ENCODE measurements at regions of chr1 and their contacts with region 1.

Region 1: DNA sequence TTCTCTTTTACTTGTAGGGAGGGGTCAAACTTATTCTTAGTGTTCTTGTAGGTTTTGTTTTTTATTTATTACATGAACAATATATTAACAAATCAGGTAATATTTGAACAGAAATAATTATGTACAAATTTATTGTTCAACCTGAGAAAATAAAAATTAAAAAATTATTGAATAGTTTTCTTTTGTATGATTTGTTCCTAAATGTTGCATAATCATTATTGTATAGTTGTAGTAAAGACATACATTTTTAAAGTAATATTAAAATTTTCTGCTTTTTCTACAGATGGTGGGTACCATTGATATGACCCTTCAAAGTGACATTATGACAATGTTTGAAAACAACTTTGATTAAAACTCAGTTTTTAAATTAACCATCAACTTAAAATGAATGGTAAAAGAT is 15.9 kb upstream of the EPHX4 start:
- DNase-seq: no peak
- H3K4me3 Mint-ChIP-seq: no peak overlapping the region
- H3K27ac Mint-ChIP-seq: no peak overlapping the region
- H3K4me1 Mint-ChIP-seq: no peaks in the 10 kb centered on the region
- H3K27me3 Mint-ChIP-seq: no peaks in the 10 kb centered on the region
- CTCF ChIP-seq: no peak

Region 2: DNA sequence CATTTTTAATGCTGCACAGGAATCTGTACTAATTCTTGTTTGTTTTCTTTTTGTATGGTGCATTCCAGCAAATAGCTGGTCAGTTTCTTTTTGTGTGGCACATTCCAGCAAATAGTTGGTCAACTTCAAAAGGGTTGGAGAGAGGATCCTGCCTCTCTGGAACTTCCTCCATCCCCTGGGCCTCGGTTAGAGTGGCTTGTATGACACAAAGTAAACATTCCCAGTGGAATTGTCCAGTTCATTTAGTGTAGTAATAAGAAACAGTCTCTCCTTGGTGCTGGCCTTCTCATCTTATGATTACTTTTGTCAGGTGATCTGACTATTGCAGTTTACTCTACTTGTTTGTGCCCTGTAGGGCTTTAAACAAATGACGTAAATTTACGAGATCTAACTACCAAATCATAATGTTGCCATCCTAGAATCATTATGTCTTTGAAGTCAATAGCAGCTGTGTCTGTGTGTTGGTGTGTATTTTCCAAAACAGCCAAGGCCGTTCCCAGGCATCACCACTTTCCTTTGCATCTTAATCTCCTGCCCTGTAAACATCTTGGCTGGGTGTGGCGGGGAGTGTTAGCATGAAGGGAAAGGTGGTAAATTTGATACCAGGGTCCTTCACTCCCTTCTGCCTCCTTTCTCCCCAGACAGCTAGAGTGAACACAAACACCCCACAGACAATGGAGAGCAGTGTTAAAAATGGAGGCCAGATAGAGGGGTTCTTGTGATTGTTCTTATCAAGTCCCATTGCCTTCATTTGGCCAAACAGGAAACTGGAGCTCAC is 435.4 kb before region 1 on chr1:
- CTCF ChIA-PET with region 1: no interaction called
- intact Hi-C with region 1: no loop called
- DNase-seq: no peak
- H3K4me3 Mint-ChIP-seq: no peak overlapping the region
- H3K27ac Mint-ChIP-seq: no peak overlapping the region
- H3K4me1 Mint-ChIP-seq: no peaks in the 10 kb centered on the region
- H3K27me3 Mint-ChIP-seq: no peaks in the 10 kb centered on the region
- CTCF ChIP-seq: no peak

Region 3: DNA sequence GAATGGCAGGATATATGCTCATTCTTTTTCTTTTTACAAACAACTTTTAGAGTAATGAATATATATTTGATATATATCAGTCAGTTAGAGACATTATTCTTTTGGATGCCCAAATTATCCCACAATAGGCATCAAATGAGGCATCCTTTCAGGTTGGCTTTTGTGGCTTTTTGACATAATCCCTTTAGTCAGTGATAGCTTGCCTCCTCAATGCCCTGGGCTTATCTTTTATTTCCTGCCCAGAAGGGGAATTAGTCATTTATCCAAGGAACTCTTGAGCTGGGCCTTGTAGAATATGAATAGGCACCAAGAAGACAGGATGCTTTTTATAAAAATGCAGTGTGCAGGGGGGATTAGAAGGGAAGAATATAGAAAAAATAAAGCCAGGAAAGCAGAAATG is 38.0 kb after region 1 on chr1:
- CTCF ChIA-PET with region 1: no interaction called
- intact Hi-C with region 1: loop called (anchors 1 kb)
- DNase-seq: no peak
- H3K4me3 Mint-ChIP-seq: no peak overlapping the region
- H3K27ac Mint-ChIP-seq: no peak overlapping the region
- H3K4me1 Mint-ChIP-seq: no peaks in the 10 kb centered on the region
- H3K27me3 Mint-ChIP-seq: no peaks in the 10 kb centered on the region
- CTCF ChIP-seq: no peak

Measured in Calu3 (cell line).